Activated CD4-positive, alpha-beta memory T cell treated with anti-CD3 and anti-CD28 coated beads for 36 hours (primary cell): ENCODE measurements at regions of chr5 and their contacts with region 1.

Region 1: GRCh38 chr5:36690041-36690961 is 83.9 kb downstream of the SLC1A3 start:
- DNase-seq: peak; percentile 77
- H3K4me3 Mint-ChIP-seq: peak overlapping the region; percentile 67
- H3K27ac Mint-ChIP-seq: no peak overlapping the region
- H3K4me1 Mint-ChIP-seq: peaks cover 13% of the 10 kb centered on the region
- H3K27me3 Mint-ChIP-seq: peaks cover 20% of the 10 kb centered on the region

Region 2: DNA sequence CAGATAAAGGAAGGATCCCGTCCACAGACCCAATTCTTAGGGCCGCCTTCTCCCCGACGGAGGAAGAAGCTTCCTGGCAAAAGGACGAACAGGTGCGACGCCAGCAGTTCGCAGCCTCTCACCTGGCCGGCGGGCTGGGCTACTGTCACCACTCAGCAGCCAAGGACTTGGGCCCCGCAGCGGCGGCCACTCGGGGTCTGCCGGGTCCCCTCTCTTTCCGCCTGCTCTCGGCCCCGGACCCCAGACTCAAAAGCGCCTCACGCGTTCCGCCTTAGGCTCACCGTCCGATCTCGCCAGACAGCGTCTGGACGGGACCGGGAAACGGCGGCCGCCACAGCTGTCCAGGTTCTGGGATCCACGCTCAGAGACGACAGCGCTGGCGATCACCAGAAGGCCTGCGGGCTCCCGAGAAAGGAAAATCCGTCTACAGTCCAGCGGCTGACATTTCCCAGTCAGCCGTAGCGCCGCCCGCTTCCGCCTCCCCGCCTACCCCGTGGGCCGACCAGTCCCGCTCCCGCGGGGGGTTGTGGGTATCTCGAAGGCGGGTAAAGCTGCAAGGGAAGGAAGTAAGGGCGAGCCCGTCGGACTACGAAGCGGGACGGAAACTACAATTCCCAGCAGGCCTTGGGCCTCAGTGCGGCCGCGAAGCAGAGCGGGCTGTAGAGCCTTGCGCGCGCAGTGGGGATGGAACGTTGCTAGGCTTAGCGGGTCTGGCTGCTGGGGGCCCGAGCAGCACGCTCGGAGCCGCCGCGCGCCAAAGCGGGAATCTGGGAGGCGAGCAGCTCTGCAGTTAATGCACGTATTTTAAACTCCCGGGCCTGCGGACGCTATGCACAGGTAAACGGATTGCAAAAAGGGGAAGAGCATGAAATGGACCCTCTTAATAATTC is 538.6 kb before region 1 on chr5 and contains the starts of genes LMBRD2 and SKP2:
- CTCF ChIA-PET with region 1: no interaction called
- POLR2A ChIA-PET with region 1: no interaction called
- intact Hi-C with region 1: loop called (anchors 10 kb)
- DNase-seq: peak; percentile 98
- H3K4me3 Mint-ChIP-seq: peak within 1 kb of the TSS; percentile 95
- H3K27ac Mint-ChIP-seq: peak within 1 kb of the TSS; percentile 84
- H3K4me1 Mint-ChIP-seq: peaks cover 62% of the 10 kb centered on the region
- H3K27me3 Mint-ChIP-seq: no peaks in the 10 kb centered on the region
- total RNA-seq, gene LMBRD2: 8.1 to 10.0 TPM
- total RNA-seq, gene SKP2: 33.1 to 34.7 TPM

Region 3: DNA sequence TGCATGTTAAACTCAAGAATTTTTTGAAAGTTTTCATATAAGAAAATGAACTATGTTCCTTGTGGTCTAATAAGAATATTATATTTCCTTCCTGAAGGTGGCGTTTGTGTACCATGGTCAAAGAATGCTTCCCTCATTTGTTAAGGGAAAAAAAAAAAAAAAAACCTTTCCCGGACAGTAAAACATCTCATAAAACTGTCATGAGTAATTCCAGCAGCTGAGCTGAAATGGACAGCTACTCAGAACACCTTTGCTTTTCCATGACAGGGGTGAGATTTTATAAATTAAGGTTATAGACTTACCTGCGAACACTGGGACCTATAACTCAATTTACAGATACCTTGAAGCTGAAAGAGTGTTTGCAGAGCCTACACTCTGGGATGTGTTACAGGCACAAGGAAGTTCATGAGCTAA is 275.4 kb before region 1 on chr5:
- CTCF ChIA-PET with region 1: interaction called, 8 read pairs
- POLR2A ChIA-PET with region 1: no interaction called
- intact Hi-C with region 1: loop called (anchors 2 kb)
- DNase-seq: no peak
- H3K4me3 Mint-ChIP-seq: no peak overlapping the region
- H3K27ac Mint-ChIP-seq: no peak overlapping the region
- H3K4me1 Mint-ChIP-seq: peaks cover 7% of the 10 kb centered on the region
- H3K27me3 Mint-ChIP-seq: peaks cover 3% of the 10 kb centered on the region

Region 4: DNA sequence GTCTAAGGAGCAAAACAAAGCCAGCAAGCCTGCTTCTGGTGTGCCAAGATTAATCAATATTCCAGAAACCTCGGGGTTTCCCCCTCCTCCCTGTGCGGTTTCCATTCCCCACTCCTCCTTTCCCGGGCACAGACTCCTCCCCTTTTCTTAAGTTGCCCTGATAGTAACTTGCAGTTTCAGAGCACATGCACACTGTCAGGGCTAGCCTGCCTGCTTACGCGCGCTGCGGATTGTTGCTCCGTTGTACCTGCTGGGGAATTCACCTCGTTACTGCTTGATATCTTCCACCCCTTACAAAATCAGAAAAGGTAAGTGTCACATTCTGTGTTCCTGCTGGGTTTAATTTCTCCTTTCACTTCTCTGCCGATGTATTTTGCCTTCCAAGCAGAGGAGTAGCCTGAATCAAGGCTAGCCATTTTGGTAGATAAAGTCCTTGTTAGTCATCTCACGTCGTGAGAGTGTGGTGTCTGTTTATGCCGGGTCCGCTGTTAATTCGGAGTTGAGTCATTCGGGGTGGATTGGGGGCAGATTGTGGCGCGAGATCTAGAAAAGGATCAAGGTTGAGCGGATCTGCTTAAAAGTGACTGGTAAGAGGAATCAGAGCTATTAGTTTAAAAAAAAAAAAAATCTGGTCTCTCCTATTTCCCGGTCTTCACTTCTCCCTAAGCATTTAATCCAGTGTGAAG is 83.7 kb before region 1 on chr5 and contains the start of gene SLC1A3:
- CTCF ChIA-PET with region 1: interaction called, 3 read pairs
- POLR2A ChIA-PET with region 1: no interaction called
- intact Hi-C with region 1: loop called (anchors 2 kb)
- DNase-seq: peak; percentile 76
- H3K4me3 Mint-ChIP-seq: peak within 1 kb of the TSS; percentile 72
- H3K27ac Mint-ChIP-seq: peak within 1 kb of the TSS; percentile 54
- H3K4me1 Mint-ChIP-seq: peaks cover 18% of the 10 kb centered on the region
- H3K27me3 Mint-ChIP-seq: peaks cover 54% of the 10 kb centered on the region
- total RNA-seq, gene SLC1A3: 0.29 TPM in 1 of 2 experiments, not detected in the other

Region 5: DNA sequence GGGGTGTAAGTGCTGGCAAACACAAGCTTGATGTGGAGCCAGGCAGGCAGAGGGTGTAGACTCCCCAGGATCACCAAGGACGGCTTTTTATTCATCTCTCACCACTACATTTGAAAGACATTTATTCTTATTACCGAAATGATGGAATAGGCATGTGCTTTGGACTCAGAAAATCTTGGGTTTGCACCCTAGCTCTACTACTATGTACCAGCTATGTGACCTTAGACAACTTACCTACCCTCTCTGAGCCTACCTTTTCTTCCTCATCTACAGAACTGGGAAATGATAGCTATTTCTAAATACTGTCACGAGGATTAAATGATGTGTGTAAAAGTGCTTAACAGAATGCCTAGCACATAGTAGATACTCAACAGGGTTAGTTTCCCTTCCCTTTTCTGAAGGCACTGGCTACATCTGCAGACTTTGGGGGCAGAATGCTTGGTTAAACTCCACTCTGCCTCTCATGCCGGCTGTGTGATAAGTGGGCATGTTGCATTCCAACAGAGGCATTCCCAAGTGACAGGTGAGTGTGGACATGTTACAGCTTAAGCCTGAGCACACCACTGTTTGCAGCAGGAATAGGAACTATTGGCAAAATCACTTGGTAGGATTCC is 10.9 kb after region 1 on chr5:
- CTCF ChIA-PET with region 1: interaction called, 16 read pairs
- POLR2A ChIA-PET with region 1: interaction called, 4 read pairs
- intact Hi-C with region 1: no loop called
- DNase-seq: no peak
- H3K4me3 Mint-ChIP-seq: no peak overlapping the region
- H3K27ac Mint-ChIP-seq: no peak overlapping the region
- H3K4me1 Mint-ChIP-seq: no peaks in the 10 kb centered on the region
- H3K27me3 Mint-ChIP-seq: peaks cover 13% of the 10 kb centered on the region